Motor neuron (in vitro differentiated cells): ENCODE measurements at regions of chr3 and their contacts with region 1.

Region 1: DNA sequence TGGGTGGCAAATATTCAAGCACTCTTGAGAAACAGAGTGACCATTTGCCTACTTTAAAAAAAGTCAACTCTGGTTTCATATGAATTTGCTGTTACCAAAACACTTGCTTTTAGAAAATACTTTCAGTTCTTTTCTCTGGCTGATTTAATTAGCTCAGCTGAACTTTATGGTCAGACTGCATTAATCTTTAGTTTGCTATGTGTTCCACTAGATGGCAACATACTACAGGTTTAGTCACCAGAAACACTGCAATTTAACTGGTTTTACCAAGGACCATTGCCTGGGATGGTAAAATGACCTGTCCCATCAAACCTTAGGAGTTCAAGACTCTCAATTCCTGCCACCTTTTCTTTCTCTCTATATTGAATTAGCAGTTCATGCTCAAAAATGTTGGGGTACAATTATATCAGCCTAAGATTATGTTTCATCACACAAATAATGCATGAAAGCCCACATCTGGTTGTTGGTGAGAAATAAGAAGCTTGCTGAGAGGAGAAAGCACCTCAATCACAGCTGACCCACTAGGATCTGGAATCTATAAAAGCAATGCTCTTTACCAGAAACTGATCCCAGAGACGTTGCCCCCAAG is 14.2 kb downstream of the EIF4E3 start:
- ATAC-seq: peak in 6 of 8 experiments; percentile 49 to 85 (median 74)
- H3K4me3 ChIP-seq: no peak overlapping the region
- H3K27ac ChIP-seq: no peak overlapping the region
- H3K4me1 ChIP-seq: no peaks in the 10 kb centered on the region

Region 2: DNA sequence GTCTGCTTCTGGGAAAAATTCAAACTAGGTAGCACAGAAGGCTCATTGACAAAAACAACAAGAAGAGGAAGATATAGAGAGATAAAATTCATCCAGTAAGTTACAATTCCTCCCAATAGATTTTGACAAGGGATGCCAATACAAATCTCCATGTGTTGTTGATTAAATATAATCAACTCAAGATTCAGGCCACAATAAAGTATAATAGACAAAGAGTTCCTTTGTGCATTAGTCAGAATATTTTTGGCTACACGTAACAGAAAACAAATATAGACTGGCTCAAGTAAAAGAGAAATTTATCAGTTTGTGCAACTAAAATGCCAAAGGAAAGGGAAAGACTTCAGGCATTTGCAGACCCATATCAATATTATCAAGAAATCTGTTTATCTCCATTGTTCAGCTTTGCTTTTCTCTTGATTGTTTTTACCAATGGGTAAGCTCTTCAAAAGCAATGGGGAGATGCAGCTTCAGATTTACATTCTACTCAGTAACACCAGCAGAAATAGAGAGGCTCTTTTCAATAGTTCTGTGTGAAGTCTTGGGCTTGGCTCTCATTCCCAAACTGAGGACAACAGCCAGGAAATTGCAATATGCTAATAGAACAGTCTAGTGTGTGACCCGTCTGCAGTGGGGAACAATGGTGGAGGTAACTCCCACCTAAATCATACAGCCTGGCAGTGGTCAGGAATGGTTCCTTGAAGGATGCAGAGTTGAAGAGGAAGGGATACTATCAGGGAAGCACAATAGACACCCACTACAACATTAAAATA is 151.6 kb after region 1 on chr3:
- in situ Hi-C with region 1: loop called in 1 of 9 experiments (anchors 10 kb)
- ATAC-seq: peak in 2 of 8 experiments; percentile 52 to 66
- H3K4me3 ChIP-seq: no peak overlapping the region
- H3K27ac ChIP-seq: no peak overlapping the region
- H3K4me1 ChIP-seq: no peaks in the 10 kb centered on the region

Region 3: DNA sequence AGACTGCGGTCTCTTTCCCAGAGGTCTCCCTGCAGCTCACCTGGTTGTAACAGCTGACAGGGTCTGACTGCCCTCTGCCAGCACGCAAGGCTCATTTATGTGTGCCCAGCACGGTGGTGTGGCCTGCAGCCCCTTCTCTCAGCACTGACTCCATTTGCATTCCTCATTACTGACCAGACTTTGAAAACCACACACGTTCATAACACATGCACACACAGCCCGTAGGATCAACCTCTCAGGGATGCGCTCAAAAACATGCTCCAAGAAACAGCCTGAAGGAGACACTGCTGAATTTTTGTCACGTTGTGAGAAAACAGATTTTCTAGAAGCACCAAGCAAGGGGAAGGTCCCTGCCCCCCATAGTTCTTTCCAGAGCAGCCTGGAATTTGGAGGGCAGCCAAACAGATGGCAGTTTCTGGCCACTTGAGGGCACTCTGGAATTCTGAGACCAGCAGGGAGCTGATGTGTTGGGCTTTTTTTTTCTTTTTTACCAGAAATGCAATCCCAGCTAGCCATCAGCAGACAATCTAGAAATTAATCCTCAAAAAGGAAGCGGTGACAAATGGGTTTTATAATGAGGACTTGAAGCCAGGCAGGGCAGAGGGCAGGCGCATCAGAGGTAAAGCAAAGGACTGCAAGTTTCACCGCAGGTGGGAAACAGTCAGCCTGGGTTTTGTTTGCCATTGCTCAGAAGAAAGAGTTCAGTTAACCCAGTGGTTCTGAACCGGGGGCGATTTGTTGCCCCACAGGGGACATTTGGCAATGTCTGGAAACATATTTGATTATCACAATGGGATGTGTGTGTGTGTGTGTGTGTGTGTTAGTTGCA is 244.5 kb after region 1 on chr3:
- in situ Hi-C with region 1: loop called in 1 of 9 experiments (anchors 25 kb)
- ATAC-seq: peak; percentile 72 to 95 (median 90)
- H3K4me3 ChIP-seq: no peak overlapping the region
- H3K27ac ChIP-seq: no peak overlapping the region
- H3K4me1 ChIP-seq: peaks cover 8 to 12% of the 10 kb centered on the region in 2 donors

Region 4: GRCh38 chr3:72847751-72848702 is 1137.0 kb after region 1 on chr3 and contains the start of gene SHQ1:
- in situ Hi-C with region 1: loop called in 1 of 9 experiments (anchors 25 kb)
- ATAC-seq: peak; percentile 93 to 99 (median 98)
- H3K4me3 ChIP-seq: peak within 1 kb of the TSS; percentile 55 to 76 (median 62)
- H3K27ac ChIP-seq: peak within 1 kb of the TSS in 1 of 2 donors; percentile 3
- H3K4me1 ChIP-seq: peaks cover 0 to 6% of the 10 kb centered on the region in 2 donors
- total RNA-seq, gene SHQ1: 5.6 to 25.0 (median 10.2) TPM

Region 5: DNA sequence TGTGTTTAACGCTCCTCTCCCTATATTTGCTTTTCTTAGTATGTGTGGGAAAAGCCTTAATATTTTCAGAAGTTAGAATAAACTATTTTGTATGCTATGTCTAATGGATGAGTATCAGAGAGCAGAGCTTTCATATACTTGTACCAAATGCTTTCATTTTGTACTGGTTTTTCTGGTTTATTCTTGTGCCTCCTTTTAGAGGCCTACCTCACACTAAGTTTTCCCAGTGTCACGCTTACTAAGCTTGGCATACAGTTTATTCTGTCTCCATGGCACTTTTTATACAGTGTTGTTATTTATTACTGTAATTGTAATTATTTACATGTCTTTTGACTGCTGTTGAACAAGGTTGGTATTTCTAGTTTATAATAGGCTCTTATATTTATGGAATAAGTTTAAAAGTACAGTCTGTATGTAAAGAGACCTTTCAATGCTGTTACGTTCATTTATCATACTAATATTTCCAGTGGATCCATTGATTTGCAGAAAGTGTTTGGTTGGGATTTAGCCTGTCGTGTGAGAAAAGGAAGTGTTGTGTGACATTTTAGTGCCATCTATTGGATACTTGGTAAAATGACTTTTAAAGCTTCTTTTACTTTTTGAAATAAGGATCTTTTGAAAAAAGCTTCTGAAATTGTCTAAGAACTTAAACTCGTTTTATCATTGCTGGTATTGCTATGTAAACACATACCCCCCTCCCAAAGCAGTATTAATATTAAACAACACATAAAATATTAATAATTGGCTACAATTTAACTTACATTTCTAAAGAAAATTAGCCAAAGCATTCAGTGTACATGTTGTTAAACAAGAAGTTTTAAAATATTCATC is 1345.2 kb after region 1 on chr3:
- in situ Hi-C with region 1: loop called in 1 of 9 experiments (anchors 25 kb)
- ATAC-seq: peak in 3 of 8 experiments; percentile 12 to 33 (median 20)
- H3K4me3 ChIP-seq: no peak overlapping the region
- H3K27ac ChIP-seq: no peak overlapping the region
- H3K4me1 ChIP-seq: no peaks in the 10 kb centered on the region

Region 6: GRCh38 chr3:73086071-73086494 is 1375.1 kb after region 1 on chr3:
- in situ Hi-C with region 1: loop called in 1 of 9 experiments (anchors 25 kb)
- ATAC-seq: peak in 5 of 8 experiments; percentile 41 to 75 (median 60)
- H3K4me3 ChIP-seq: no peak overlapping the region
- H3K27ac ChIP-seq: no peak overlapping the region
- H3K4me1 ChIP-seq: no peaks in the 10 kb centered on the region